Cardiac septum (tissue), 1 donor: ENCODE measurements at regions of chr17 and their contacts with region 1.

Region 1: GRCh38 chr17:68759343-68760132 is 158.4 kb upstream of the FAM20A start:
- DNase-seq: peak; percentile 87

Region 2: GRCh38 chr17:68539548-68540467 is 219.7 kb before region 1 on chr17:
- intact Hi-C with region 1: loop called (anchors 10 kb)
- DNase-seq: no peak